ENCODE measurements at regions of chr14 and their contacts with region 1.

Region 1: GRCh38 chr14:63266106-63266505 is 52.6 kb downstream of the GPHB5 start:
- DNase-seq: peak; percentile 14
- ATAC-seq: no peak
- H3K4me3 ChIP-seq: no peak overlapping the region
- H3K27ac ChIP-seq: no peak overlapping the region
- H3K4me1 ChIP-seq: no peaks in the 10 kb centered on the region
- H3K27me3 ChIP-seq: peaks cover 48% of the 10 kb centered on the region
- CTCF ChIP-seq: no peak

Region 2: DNA sequence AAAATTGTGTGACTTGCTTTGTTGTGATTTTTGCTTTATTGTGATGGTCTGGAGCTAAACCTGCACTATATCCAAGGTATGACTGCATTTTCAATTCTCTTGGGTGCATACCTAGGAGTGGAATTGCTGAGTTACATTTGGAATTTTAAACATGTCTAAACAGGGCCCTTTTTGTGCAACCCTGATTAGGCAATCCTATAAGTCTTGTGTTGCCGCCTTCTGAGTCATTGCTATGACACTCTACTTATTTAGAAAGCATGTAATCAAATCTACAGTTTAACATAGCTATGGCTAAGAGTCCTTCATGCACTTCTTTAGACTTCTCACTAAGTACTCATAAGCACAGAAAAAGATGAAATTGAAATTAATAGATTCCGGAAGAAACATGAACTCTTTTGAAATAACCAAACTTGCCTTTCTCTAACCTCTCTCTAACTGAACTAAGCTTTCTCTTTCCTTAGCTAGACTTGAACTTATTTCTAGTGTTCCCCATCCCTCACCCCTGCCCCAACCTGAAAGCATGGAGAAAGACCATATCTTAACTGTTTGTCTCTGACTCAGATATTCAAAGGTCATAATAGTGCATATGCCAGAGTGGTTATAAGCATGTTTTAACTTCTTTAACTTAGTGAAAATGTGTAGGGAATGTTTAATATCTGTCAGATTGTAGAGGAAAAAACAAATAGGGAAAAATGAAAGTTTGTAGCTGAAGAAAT is 1300.9 kb before region 1 on chr14:
- CTCF ChIA-PET with region 1: no interaction called
- POLR2A ChIA-PET with region 1: interaction called, 15 read pairs
- intact Hi-C with region 1: no loop called
- DNase-seq: peak; percentile 87
- ATAC-seq: peak; percentile 88
- H3K4me3 ChIP-seq: no peak overlapping the region
- H3K27ac ChIP-seq: peak overlapping the region; percentile 55
- H3K4me1 ChIP-seq: peaks cover 25% of the 10 kb centered on the region
- H3K27me3 ChIP-seq: no peaks in the 10 kb centered on the region
- CTCF ChIP-seq: no peak

Region 3: GRCh38 chr14:63203618-63204406 is 62.3 kb before region 1 on chr14:
- CTCF ChIA-PET with region 1: no interaction called
- POLR2A ChIA-PET with region 1: no interaction called
- intact Hi-C with region 1: no loop called
- DNase-seq: peak; percentile 53
- ATAC-seq: peak; percentile 95
- H3K4me3 ChIP-seq: peak overlapping the region; percentile 44
- H3K27ac ChIP-seq: no peak overlapping the region
- H3K4me1 ChIP-seq: no peaks in the 10 kb centered on the region
- H3K27me3 ChIP-seq: peaks cover 30% of the 10 kb centered on the region
- CTCF ChIP-seq: 0 out of 2 replicates have a peak, but pooled peaks have one; percentile 15

Measured in PC-3 (cell line).